ENCODE measurements at regions of chr14 and their contacts with region 1.

Region 1: DNA sequence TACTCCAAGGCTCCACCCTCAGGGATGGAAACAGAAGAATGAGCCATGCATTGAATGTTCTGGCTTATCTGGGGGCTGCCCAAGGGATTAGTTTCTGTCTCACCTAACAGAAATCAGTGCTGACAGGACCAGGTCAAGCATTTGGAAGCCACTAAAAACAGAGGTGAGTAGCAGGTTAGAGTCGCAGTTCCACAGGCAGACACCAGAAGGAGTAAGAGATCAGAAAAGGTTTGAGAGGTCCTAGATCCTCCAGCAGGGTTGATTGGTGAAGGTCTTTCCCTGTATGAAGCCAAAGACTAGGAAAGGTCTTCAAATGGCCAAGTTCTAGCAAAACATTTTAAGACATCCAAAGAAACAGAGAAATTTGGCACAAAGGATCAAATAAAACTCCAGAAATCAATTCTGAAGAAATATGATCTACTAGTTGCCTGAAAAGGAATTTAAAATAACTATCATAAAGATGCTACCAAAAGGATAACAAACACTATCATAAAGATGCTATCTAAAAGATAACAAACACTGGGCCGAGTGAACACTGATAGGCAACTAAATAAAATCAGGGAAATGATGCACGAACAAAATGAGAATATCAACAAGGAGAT is 19.5 kb upstream of the TTC9 start:
- DNase-seq: peak; percentile 54 to 68 (median 58)
- H3K4me3 ChIP-seq: no peak overlapping the region
- H3K27ac ChIP-seq: no peak overlapping the region
- H3K4me1 ChIP-seq: no peaks in the 10 kb centered on the region
- H3K27me3 ChIP-seq: peaks cover 0 to 4% (median 0%) of the 10 kb centered on the region in 5 experiments

Region 2: GRCh38 chr14:70714055-70714621 is 91.9 kb after region 1 on chr14:
- CTCF ChIA-PET with region 1: interaction called, 59 read pairs
- POLR2A ChIA-PET with region 1: no interaction called
- DNase-seq: peak; percentile 71 to 83 (median 81)
- H3K4me3 ChIP-seq: no peak overlapping the region
- H3K27ac ChIP-seq: no peak overlapping the region
- H3K4me1 ChIP-seq: no peaks in the 10 kb centered on the region
- H3K27me3 ChIP-seq: peaks cover 0 to 7% (median 0%) of the 10 kb centered on the region in 5 experiments

Region 3: DNA sequence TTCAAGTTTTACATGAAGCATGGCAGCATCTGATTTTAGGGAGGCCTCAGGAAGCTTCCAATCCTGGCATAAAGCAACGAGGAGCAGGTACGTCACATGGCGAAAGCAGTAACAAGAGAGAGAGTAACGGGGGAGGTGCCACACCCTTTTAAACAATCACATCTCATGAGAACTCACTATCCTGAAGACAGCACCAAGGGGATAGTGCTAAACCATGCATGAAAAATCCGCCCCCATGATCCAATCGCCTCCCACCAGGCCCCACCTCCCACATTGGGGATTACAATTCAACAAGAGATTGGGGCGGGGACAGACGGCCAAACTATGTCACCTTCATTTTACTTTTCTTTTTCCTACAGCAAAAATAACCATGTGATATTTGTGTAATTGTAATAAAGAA is 194.3 kb after region 1 on chr14:
- CTCF ChIA-PET with region 1: interaction called, 12 read pairs
- POLR2A ChIA-PET with region 1: no interaction called
- DNase-seq: no peak
- H3K4me3 ChIP-seq: no peak overlapping the region
- H3K27ac ChIP-seq: no peak overlapping the region
- H3K4me1 ChIP-seq: peaks cover 0 to 10% (median 3%) of the 10 kb centered on the region in 4 experiments
- H3K27me3 ChIP-seq: peaks cover 0 to 39% (median 6%) of the 10 kb centered on the region in 5 experiments

Measured in common myeloid progenitor, CD34-positive (primary cell).